PC-9 (cell line): ENCODE measurements at regions of chrX and their contacts with region 1.

Region 1: GRCh38 chrX:15564981-15565579 is 35.7 kb downstream of the ACE2 start:
- DNase-seq: peak; percentile 66 to 80
- H3K4me3 ChIP-seq: no peak overlapping the region
- H3K27ac ChIP-seq: no peak overlapping the region
- H3K4me1 ChIP-seq: peaks cover 6% of the 10 kb centered on the region
- H3K27me3 ChIP-seq: no peaks in the 10 kb centered on the region
- CTCF ChIP-seq: peak; percentile 71

Region 2: DNA sequence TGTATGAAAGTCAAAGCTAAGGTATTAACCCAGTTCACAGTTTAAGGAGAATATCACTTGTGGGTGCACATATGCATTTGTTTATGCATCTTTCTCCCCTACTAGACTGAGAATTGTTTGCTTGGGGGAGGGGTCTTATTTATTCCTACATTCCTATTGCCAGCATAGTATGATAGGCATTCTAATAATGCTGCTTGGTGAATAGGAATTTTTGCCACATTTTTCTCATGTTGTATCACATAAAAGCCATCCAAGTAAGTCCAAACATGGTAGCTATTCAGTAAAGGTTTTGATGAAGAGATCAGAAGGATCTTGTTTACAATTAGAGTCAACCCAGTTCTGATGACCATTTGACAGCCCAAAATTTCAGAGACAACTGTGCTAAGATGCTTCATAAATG is 343.8 kb before region 1 on chrX:
- CTCF ChIA-PET with region 1: no interaction called
- POLR2A ChIA-PET with region 1: no interaction called
- intact Hi-C with region 1: no loop called
- DNase-seq: no peak
- H3K4me3 ChIP-seq: no peak overlapping the region
- H3K27ac ChIP-seq: no peak overlapping the region
- H3K4me1 ChIP-seq: no peaks in the 10 kb centered on the region
- H3K27me3 ChIP-seq: no peaks in the 10 kb centered on the region
- CTCF ChIP-seq: no peak

Region 3: DNA sequence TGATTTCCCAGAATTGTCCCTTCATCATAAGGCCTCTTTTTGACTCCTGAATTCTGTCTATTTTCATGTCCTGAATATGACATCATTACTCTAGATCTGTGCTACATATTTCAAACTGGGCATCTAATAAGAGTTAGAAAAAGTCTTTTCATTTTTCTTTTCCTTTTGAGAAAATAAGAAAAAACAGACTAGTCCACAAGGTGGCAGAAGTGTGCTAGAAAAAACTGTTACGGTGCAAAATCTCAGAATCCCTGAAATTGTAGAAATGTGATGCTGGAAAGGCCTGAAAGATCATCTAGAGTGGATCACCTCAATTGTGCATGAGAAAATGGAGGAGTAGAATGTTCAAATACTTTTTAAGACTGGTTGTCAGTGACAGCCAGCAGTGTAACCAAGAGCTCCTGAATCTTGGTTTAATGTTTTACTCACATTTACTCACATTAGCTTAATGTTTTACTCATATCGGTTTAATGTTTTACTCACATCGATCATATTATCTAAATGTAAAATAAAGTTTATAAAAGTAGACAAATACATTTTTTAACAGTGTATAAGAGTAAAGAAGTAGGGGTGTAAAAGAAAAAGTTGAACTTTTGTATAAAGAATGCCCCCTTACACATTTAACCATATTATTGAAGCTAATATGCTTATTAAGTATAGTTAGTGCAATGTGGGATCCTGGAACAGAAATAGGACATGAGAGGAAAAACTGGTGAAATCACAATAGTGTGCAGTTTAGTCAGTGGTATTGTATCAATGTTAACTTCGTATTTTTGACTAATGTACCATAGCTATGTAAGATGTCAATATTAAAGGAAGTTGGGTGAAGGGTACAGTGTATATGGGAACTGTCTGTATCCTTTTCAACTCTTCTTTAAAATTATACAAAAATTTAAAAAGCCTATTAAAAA is 264.9 kb before region 1 on chrX:
- CTCF ChIA-PET with region 1: no interaction called
- POLR2A ChIA-PET with region 1: interaction called, 3 read pairs
- intact Hi-C with region 1: loop called (anchors 5 kb)
- DNase-seq: no peak
- H3K4me3 ChIP-seq: no peak overlapping the region
- H3K27ac ChIP-seq: no peak overlapping the region
- H3K4me1 ChIP-seq: peaks cover 5% of the 10 kb centered on the region
- H3K27me3 ChIP-seq: no peaks in the 10 kb centered on the region
- CTCF ChIP-seq: peak; percentile 75

Region 4: DNA sequence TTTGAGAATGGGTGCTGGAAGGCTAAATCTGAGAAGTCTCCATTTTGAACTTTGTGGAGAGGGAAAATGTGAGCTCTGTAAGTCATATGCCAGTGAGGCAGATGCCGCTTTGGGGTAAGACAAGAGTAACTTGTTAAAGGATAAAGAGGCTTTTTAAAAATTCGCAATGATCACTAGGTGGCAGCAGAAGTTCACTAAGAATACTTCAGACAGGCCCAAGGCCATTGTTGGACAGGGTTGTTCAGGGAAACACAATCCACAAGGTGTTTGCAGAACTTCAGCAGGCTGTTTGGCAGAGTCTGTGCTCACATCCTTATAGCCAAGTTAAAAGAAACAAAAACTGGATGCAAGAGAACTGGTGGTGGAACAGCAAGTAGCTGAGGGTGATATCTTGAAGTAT is 216.0 kb before region 1 on chrX:
- CTCF ChIA-PET with region 1: no interaction called
- POLR2A ChIA-PET with region 1: interaction called, 3 read pairs
- intact Hi-C with region 1: loop called (anchors 1 kb)
- DNase-seq: peak; percentile 16 to 57
- H3K4me3 ChIP-seq: no peak overlapping the region
- H3K27ac ChIP-seq: no peak overlapping the region
- H3K4me1 ChIP-seq: no peaks in the 10 kb centered on the region
- H3K27me3 ChIP-seq: no peaks in the 10 kb centered on the region
- CTCF ChIP-seq: peak; percentile 72

Region 5: GRCh38 chrX:15471016-15471415 is 94.1 kb before region 1 on chrX:
- CTCF ChIA-PET with region 1: no interaction called
- POLR2A ChIA-PET with region 1: no interaction called
- intact Hi-C with region 1: loop called (anchors 1 kb)
- DNase-seq: peak; percentile 40 to 64
- H3K4me3 ChIP-seq: no peak overlapping the region
- H3K27ac ChIP-seq: peak overlapping the region; percentile 28
- H3K4me1 ChIP-seq: peaks cover 36% of the 10 kb centered on the region
- H3K27me3 ChIP-seq: no peaks in the 10 kb centered on the region
- CTCF ChIP-seq: peak; percentile 76

Region 6: GRCh38 chrX:15493118-15493962 is 71.7 kb before region 1 on chrX and contains the start of gene PIR:
- CTCF ChIA-PET with region 1: no interaction called
- POLR2A ChIA-PET with region 1: interaction called, 4 read pairs
- intact Hi-C with region 1: loop called (anchors 1 kb)
- DNase-seq: peak; percentile 82 to 94
- H3K4me3 ChIP-seq: peak within 1 kb of the TSS; percentile 86
- H3K27ac ChIP-seq: peak within 1 kb of the TSS; percentile 94
- H3K4me1 ChIP-seq: peaks cover 23% of the 10 kb centered on the region
- H3K27me3 ChIP-seq: no peaks in the 10 kb centered on the region
- CTCF ChIP-seq: peak; percentile 40; the same call in 1 of the 2 replicates
- total RNA-seq, gene PIR: 177 and 197 TPM in 2 replicates

Region 7: DNA sequence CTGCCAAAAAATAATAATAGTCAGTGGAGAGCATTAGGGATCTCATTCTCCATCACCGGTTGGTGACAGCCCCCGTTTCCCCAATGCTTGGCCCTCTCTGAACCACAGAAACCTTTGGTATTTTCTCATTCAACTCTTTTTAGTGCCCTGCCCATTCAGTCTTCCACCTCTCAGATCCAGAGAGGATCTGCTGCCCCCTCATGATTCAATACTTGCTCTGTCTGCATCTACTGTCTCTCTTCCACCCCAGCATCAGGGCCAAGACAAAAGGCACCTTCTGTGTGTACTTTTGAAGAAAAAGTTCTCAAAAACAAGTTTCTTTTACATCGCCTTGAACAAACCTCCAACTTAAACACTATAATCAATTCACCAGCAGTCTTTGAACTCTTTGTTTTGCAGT is 80.2 kb after region 1 on chrX:
- CTCF ChIA-PET with region 1: no interaction called
- POLR2A ChIA-PET with region 1: no interaction called
- intact Hi-C with region 1: loop called (anchors 1 kb)
- DNase-seq: no peak
- H3K4me3 ChIP-seq: no peak overlapping the region
- H3K27ac ChIP-seq: no peak overlapping the region
- H3K4me1 ChIP-seq: no peaks in the 10 kb centered on the region
- H3K27me3 ChIP-seq: no peaks in the 10 kb centered on the region
- CTCF ChIP-seq: no peak

Region 8: GRCh38 chrX:15674841-15675489 is 109.9 kb after region 1 on chrX:
- CTCF ChIA-PET with region 1: no interaction called
- POLR2A ChIA-PET with region 1: no interaction called
- intact Hi-C with region 1: loop called (anchors 2 kb)
- DNase-seq: peak; percentile 86 to 89
- H3K4me3 ChIP-seq: peak overlapping the region; percentile 78
- H3K27ac ChIP-seq: peak overlapping the region; percentile 95
- H3K4me1 ChIP-seq: peaks cover 21% of the 10 kb centered on the region
- H3K27me3 ChIP-seq: no peaks in the 10 kb centered on the region
- CTCF ChIP-seq: no peak

Region 9: GRCh38 chrX:15956676-15957075 is 391.6 kb after region 1 on chrX:
- CTCF ChIA-PET with region 1: no interaction called
- POLR2A ChIA-PET with region 1: no interaction called
- intact Hi-C with region 1: no loop called
- DNase-seq: no peak
- H3K4me3 ChIP-seq: no peak overlapping the region
- H3K27ac ChIP-seq: no peak overlapping the region
- H3K4me1 ChIP-seq: no peaks in the 10 kb centered on the region
- H3K27me3 ChIP-seq: no peaks in the 10 kb centered on the region
- CTCF ChIP-seq: no peak

Region 10: GRCh38 chrX:16445166-16445752 is 880.2 kb after region 1 on chrX:
- CTCF ChIA-PET with region 1: no interaction called
- POLR2A ChIA-PET with region 1: no interaction called
- intact Hi-C with region 1: no loop called
- DNase-seq: peak in 1 of 2 experiments; percentile 17
- H3K4me3 ChIP-seq: no peak overlapping the region
- H3K27ac ChIP-seq: no peak overlapping the region
- H3K4me1 ChIP-seq: no peaks in the 10 kb centered on the region
- H3K27me3 ChIP-seq: no peaks in the 10 kb centered on the region
- CTCF ChIP-seq: peak; percentile 73